ENCODE measurements at regions of chr14 and their contacts with region 1.

Region 1: DNA sequence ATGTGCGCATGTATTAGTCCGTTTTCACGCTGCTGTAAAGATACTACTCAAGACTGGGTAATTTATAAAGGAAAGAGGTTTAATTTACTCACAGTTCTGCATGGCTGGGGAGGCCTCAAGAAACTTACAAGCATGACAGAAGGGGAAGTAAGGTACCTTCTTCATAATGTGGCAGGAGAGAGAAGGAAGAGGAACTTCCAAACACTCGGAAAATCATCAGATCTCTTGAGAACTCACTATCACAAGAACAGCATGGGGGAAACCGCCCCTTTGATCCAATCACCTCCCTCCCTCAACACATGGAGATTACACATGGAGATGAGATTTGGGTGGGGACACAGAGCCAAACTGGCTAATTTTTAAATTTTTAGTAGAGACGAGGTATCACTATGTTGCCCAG is 41.8 kb upstream of the SNX6 start:
- DNase-seq: no peak
- H3K4me3 ChIP-seq: no peak overlapping the region
- H3K27ac ChIP-seq: no peak overlapping the region
- H3K4me1 ChIP-seq: no peaks in the 10 kb centered on the region
- H3K27me3 ChIP-seq: no peaks in the 10 kb centered on the region
- CTCF ChIP-seq: no peak
- POLR2A ChIP-seq: no peak

Region 2: DNA sequence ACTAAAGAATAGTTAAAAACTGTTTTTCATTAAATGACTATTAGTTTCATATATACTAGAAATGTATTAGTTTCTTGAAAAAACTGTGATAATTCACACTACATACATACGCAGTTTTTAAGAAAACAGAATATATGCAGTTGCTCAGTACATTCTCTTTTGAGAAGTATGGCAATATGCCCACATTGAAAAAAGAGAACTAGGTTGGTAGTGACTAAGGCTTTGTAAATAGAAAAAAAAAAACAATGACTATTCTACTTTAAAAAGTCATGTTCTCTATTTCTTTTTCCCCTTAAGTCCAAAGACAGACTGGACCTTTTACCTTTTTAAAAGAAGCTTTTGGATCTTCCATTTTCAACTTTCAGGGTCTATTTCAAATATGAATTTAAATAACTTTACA is 66.7 kb before region 1 on chr14:
- intact Hi-C with region 1: no loop called
- DNase-seq: no peak
- H3K4me3 ChIP-seq: no peak overlapping the region
- H3K27ac ChIP-seq: no peak overlapping the region
- H3K4me1 ChIP-seq: no peaks in the 10 kb centered on the region
- H3K27me3 ChIP-seq: no peaks in the 10 kb centered on the region
- CTCF ChIP-seq: no peak
- POLR2A ChIP-seq: no peak

Region 3: GRCh38 chr14:34722717-34723545 is 51.2 kb after region 1 on chr14:
- intact Hi-C with region 1: loop called (anchors 5 kb)
- DNase-seq: no peak
- H3K4me3 ChIP-seq: no peak overlapping the region
- H3K27ac ChIP-seq: no peak overlapping the region
- H3K4me1 ChIP-seq: peaks cover 0 to 6% (median 0%) of the 10 kb centered on the region in 3 donors
- H3K27me3 ChIP-seq: no peaks in the 10 kb centered on the region
- CTCF ChIP-seq: peak; percentile 57 to 85 (median 70)
- POLR2A ChIP-seq: no peak

Region 4: GRCh38 chr14:34750670-34751069 is 79.0 kb after region 1 on chr14:
- intact Hi-C with region 1: no loop called
- DNase-seq: no peak
- H3K4me3 ChIP-seq: no peak overlapping the region
- H3K27ac ChIP-seq: no peak overlapping the region
- H3K4me1 ChIP-seq: no peaks in the 10 kb centered on the region
- H3K27me3 ChIP-seq: no peaks in the 10 kb centered on the region
- CTCF ChIP-seq: no peak
- POLR2A ChIP-seq: no peak

Region 5: DNA sequence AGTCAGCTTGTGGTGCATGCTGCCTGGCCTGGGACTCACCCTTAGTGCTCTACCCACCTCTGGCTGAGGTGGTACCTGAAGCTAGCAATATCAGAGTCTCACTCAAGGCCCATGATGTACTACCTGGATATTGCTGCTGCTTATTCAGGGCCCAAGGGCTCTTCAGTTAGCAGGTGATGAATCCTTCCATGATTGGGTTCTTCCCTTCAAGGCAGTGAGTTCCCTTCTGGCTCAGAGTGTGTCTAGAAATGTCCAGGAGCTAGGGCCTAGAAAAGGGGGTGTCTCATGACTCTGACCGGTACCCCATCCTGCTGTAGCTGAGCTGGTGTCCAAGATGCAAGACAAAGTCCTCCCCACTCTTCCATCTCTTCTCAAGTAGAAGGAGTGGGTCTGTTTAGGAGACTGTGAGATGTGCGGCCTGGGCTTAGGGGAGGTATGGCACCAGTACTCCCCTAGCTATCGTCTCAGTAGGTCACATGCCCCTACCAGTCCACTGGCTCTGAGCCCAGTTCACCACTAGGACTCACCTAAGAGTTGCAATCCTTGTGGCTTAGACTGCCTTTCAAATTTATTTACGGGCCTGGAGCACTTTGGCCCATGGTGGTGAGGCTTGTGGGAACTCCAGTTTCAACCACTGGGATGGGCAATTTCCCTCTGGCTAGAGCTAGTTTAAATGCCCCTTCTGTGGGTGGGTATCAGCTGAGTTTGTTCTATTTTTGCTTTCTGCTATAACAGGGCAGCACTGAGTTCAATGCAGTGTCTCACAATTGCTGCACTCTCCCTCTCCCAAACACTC is 462.8 kb after region 1 on chr14:
- intact Hi-C with region 1: no loop called
- DNase-seq: no peak
- H3K4me3 ChIP-seq: no peak overlapping the region
- H3K27ac ChIP-seq: no peak overlapping the region
- H3K4me1 ChIP-seq: peaks cover 0 to 4% (median 0%) of the 10 kb centered on the region in 3 donors
- H3K27me3 ChIP-seq: no peaks in the 10 kb centered on the region
- CTCF ChIP-seq: no peak
- POLR2A ChIP-seq: no peak